B cell (primary cell): ENCODE measurements at regions of chr1 and their contacts with region 1.

Region 1: GRCh38 chr1:154404984-154405761 is at the start of gene IL6R:
- DNase-seq: peak; percentile 86
- ATAC-seq: peak; percentile 59
- H3K4me3 ChIP-seq: peak within 1 kb of the TSS; percentile 32 to 65 (median 61)
- H3K4me3 Mint-ChIP-seq: peak within 1 kb of the TSS; percentile 87
- H3K27ac ChIP-seq: peak within 1 kb of the TSS in 1 of 2 donors; percentile 35
- H3K27ac Mint-ChIP-seq: peak within 1 kb of the TSS; percentile 74
- H3K4me1 ChIP-seq: peaks cover 47 to 71% of the 10 kb centered on the region in 2 donors
- H3K4me1 Mint-ChIP-seq: peaks cover 56% of the 10 kb centered on the region
- H3K27me3 ChIP-seq: peaks cover 0 to 16% (median 3%) of the 10 kb centered on the region in 4 experiments
- H3K27me3 Mint-ChIP-seq: no peaks in the 10 kb centered on the region
- CTCF ChIP-seq: peak; percentile 13
- total RNA-seq, gene IL6R: 5.3 TPM in 2 replicates

Region 2: GRCh38 chr1:153783233-153784190 is 621.7 kb before region 1 on chr1:
- CTCF ChIA-PET with region 1: no interaction called
- POLR2A ChIA-PET with region 1: no interaction called
- intact Hi-C with region 1: no loop called
- DNase-seq: peak; percentile 95
- ATAC-seq: peak; percentile 97
- H3K4me3 ChIP-seq: peak overlapping the region; percentile 44 to 89 (median 76)
- H3K4me3 Mint-ChIP-seq: peak overlapping the region; percentile 97
- H3K27ac ChIP-seq: peak overlapping the region; percentile 94 to 95
- H3K27ac Mint-ChIP-seq: peak overlapping the region; percentile 93
- H3K4me1 ChIP-seq: peaks cover 7 to 23% of the 10 kb centered on the region in 2 donors
- H3K4me1 Mint-ChIP-seq: peaks cover 18% of the 10 kb centered on the region
- H3K27me3 ChIP-seq: no peaks in the 10 kb centered on the region
- H3K27me3 Mint-ChIP-seq: no peaks in the 10 kb centered on the region
- CTCF ChIP-seq: no peak

Region 3: DNA sequence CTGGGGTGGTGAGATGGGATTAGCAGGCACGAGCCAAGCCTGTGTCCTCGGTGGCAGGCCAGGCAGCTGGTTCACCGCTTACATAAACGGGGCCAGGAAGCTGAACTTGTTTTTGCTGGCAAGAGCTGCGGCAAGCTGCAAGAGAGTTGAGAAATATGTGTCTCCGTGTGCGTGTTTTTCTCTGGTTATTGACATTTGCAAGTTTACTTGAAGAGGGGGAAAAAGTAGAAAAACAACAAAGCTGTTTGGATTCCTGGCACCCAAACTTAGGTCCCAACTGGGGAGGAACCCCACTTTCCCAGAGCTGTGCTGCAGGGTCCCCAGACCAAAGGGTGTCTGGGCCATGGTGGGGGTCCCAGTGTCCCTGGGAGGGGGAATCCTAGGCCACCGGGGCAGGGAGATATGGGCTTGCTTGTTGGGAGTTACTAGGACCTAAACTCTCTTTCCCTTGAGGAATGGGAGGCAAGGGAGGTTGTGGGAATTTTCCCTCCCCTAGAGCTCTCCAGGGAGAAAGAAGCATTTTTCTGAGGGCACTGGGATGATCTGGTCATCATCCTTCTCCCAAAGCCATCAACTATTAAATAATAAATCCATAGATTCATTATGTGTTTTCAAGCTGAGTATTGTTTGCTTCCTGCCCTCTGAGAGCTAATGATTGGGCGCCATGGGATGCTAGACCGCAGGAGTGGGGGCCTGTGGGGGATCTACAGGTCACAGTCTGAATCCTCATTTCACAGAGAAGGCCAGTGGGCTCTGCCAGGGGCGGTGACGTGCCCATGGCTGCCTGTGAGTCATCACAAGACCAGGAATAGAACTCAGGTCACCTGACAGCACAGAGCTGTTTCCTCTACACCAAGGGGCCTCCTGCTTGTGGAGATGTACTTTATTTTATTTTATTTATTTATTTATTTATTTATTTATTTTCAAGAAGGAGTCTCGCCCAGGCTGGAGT is 14.7 kb after region 1 on chr1:
- CTCF ChIA-PET with region 1: interaction called, 10 read pairs
- POLR2A ChIA-PET with region 1: interaction called, 7 read pairs
- intact Hi-C with region 1: no loop called
- DNase-seq: peak; percentile 39
- ATAC-seq: peak; percentile 92
- H3K4me3 ChIP-seq: no peak overlapping the region
- H3K4me3 Mint-ChIP-seq: peak overlapping the region; percentile 71
- H3K27ac ChIP-seq: no peak overlapping the region
- H3K27ac Mint-ChIP-seq: peak overlapping the region; percentile 83
- H3K4me1 ChIP-seq: peaks cover 15 to 31% of the 10 kb centered on the region in 2 donors
- H3K4me1 Mint-ChIP-seq: peaks cover 29% of the 10 kb centered on the region
- H3K27me3 ChIP-seq: no peaks in the 10 kb centered on the region
- H3K27me3 Mint-ChIP-seq: no peaks in the 10 kb centered on the region
- CTCF ChIP-seq: no peak

Region 4: DNA sequence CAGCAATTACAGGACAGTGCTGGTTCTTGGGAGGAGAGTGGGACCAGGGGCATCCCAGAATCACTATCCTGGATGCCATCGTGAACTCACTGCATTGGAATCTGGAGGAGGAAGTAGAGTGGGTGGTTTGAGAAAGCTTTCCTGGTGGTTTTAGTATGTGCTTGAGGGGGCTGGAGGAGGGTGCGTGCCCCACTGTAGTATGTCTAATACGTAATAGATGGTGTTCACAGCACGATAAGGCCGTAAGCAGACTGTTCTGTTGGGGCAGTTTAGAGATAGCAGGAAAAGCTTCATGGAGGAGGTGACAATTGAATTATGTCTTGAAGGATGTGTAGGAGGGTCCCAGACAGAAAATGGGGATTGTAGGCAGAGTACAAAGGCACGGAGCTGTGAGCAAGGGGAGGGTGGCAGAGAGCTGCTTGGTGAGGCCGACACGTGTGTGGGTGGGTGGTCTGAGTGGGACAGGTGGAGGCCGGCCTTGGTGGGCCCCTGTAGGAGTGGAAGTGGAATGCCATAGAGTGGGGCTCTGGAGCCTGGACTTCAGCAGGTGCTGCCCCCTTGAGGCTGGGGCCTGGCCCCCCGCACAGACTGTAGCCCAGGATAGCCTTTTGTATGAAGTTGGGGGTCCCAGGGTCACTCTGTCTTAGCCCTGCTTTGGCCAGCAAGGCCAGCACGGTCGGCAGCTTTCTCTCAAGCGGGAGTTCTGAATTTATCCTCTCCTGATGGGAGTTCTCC is 37.0 kb after region 1 on chr1:
- CTCF ChIA-PET with region 1: interaction called, 4 read pairs
- POLR2A ChIA-PET with region 1: no interaction called
- intact Hi-C with region 1: loop called (anchors 5 kb)
- DNase-seq: no peak
- ATAC-seq: no peak
- H3K4me3 ChIP-seq: no peak overlapping the region
- H3K4me3 Mint-ChIP-seq: no peak overlapping the region
- H3K27ac ChIP-seq: no peak overlapping the region
- H3K27ac Mint-ChIP-seq: no peak overlapping the region
- H3K4me1 ChIP-seq: peaks cover 0 to 3% of the 10 kb centered on the region in 2 donors
- H3K4me1 Mint-ChIP-seq: peaks cover 13% of the 10 kb centered on the region
- H3K27me3 ChIP-seq: no peaks in the 10 kb centered on the region
- H3K27me3 Mint-ChIP-seq: no peaks in the 10 kb centered on the region
- CTCF ChIP-seq: peak; percentile 25

Region 5: DNA sequence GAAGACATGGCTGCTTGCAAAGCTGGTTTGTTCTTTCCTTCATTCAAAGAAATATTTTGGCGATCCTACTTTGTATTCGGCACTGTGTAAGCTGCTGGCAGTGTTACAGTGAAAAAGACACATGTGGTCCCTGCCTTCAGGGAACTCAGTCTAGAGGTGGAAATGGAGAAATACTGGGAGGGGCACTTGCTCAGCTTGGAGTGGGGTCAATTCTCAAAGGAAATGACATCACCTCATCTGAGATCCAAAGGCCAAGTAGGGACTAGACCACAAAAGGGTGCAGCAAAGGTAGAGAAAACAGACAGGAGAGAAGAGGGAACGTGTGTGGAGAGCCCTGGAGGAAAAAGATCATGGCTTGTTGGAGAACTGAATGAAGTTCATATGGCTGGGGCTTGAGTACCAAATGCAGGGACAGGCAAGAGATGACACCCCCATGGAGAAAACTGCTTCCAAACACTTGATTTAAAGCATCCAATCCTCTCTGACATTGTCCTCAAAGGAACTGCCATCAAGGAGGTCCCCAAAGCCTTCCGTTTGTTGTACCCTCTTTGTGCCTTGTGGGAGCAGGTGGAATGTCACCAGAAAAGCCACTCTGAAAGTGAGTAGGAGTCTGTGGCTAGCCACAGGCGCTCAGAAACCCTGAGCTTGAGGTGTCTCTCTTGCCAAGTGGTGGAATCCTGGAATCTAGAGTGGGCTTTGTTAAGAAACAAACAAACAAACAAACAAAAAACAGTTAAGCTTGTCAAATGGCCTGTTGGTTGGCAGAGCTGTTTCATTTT is 48.6 kb after region 1 on chr1:
- CTCF ChIA-PET with region 1: no interaction called
- POLR2A ChIA-PET with region 1: no interaction called
- intact Hi-C with region 1: no loop called
- DNase-seq: no peak
- ATAC-seq: no peak
- H3K4me3 ChIP-seq: no peak overlapping the region
- H3K4me3 Mint-ChIP-seq: no peak overlapping the region
- H3K27ac ChIP-seq: no peak overlapping the region
- H3K27ac Mint-ChIP-seq: no peak overlapping the region
- H3K4me1 ChIP-seq: no peaks in the 10 kb centered on the region
- H3K4me1 Mint-ChIP-seq: no peaks in the 10 kb centered on the region
- H3K27me3 ChIP-seq: no peaks in the 10 kb centered on the region
- H3K27me3 Mint-ChIP-seq: no peaks in the 10 kb centered on the region
- CTCF ChIP-seq: no peak